PC-3 (cell line): ENCODE measurements at regions of chr3 and their contacts with region 1.

Region 1: GRCh38 chr3:145411605-145412004 is 749.4 kb downstream of the PLOD2 start:
- DNase-seq: peak; percentile 62
- ATAC-seq: peak; percentile 85
- H3K4me3 ChIP-seq: no peak overlapping the region
- H3K27ac ChIP-seq: no peak overlapping the region
- H3K4me1 ChIP-seq: peaks cover 10% of the 10 kb centered on the region
- H3K27me3 ChIP-seq: no peaks in the 10 kb centered on the region
- CTCF ChIP-seq: no peak

Region 2: DNA sequence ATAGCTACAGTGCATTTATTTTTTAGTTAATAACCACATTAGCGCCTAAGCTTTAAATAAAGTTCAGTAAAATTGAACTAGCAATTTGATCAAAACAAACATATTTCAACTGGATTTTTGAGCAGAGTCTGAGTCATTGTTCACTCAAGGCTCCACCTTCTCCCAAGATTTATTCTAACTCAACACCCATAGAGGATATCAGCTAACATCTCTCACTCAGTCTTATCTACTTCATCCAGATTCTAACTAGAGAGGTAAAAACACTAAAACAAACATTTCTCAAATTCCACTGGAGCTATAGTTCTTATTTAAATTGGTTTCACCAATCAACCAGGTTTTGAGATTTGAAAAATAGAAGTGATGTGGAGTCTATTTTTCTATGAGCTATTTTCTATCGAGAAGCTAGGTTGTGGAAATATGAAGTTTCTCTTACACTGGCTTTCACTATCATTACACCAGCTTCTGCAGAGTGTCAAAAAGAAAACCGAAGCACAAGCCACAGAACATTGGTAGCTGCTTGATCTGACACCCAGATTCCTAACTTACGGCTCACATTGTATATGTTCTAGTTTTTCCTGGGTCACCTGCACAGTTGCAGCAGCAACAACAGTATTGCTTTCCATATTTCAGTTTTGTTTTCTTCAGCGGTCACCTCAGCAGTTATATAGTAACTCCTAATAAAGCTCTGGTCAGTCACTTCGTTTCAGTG is 40.9 kb before region 1 on chr3:
- CTCF ChIA-PET with region 1: no interaction called
- POLR2A ChIA-PET with region 1: no interaction called
- intact Hi-C with region 1: no loop called
- DNase-seq: no peak
- ATAC-seq: no peak
- H3K4me3 ChIP-seq: no peak overlapping the region
- H3K27ac ChIP-seq: no peak overlapping the region
- H3K4me1 ChIP-seq: no peaks in the 10 kb centered on the region
- H3K27me3 ChIP-seq: no peaks in the 10 kb centered on the region
- CTCF ChIP-seq: no peak

Region 3: DNA sequence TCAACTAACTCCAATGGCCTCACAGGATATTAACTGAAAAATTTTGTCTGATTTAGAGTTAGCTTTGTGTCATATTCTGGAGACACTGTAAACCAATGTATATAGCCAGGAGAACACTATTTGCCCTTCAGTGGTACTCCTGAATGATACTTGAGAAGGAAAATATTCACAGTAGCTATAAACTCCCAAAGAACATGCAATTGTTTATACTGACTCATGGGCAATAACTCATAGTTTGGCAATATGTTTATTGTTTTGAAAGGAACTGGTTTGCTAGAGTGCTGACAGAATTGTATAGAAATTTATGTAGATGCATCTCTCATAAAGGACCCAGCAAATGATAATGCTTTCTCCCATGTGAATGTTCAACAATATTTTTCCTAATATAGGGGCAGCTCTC is 211.7 kb after region 1 on chr3:
- CTCF ChIA-PET with region 1: no interaction called
- POLR2A ChIA-PET with region 1: no interaction called
- intact Hi-C with region 1: loop called (anchors 5 kb)
- DNase-seq: peak; percentile 30
- ATAC-seq: peak; percentile 85
- H3K4me3 ChIP-seq: no peak overlapping the region
- H3K27ac ChIP-seq: no peak overlapping the region
- H3K4me1 ChIP-seq: no peaks in the 10 kb centered on the region
- H3K27me3 ChIP-seq: no peaks in the 10 kb centered on the region
- CTCF ChIP-seq: no peak

Region 4: GRCh38 chr3:146020986-146021385 is 609.4 kb after region 1 on chr3:
- CTCF ChIA-PET with region 1: no interaction called
- POLR2A ChIA-PET with region 1: no interaction called
- intact Hi-C with region 1: loop called (anchors 2 kb)
- DNase-seq: peak; percentile 17
- ATAC-seq: no peak
- H3K4me3 ChIP-seq: no peak overlapping the region
- H3K27ac ChIP-seq: no peak overlapping the region
- H3K4me1 ChIP-seq: peaks cover 12% of the 10 kb centered on the region; the same call in 1 of the 2 replicates
- H3K27me3 ChIP-seq: no peaks in the 10 kb centered on the region
- CTCF ChIP-seq: peak; percentile 25; the same call in 1 of the 2 replicates